Kidney (tissue), 22 donors: ENCODE measurements at regions of chr14 and their contacts with region 1.

Region 1: DNA sequence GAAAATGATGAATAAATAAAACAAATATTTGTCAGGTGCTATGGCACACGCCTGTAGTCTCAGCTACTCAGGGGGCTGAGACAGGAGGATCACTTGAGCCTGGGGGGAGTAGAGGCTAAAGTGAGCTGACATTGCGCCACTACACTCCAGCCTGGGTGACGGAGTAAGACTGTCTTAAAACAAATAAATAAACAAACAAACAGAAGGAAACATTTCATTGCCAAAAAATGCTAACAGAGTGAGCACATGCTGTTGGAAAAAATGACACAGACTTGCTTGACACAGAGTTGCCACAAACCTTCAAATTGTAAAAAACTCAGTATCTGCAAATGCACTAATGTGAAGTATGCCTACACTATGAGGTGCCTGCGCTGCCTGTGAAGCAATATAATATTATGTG is 50.8 kb upstream of the AP4S1 start:
- DNase-seq: no peak
- H3K4me3 ChIP-seq: no peak overlapping the region
- H3K27ac ChIP-seq: no peak overlapping the region
- H3K4me1 ChIP-seq: peaks cover 0 to 7% (median 0%) of the 10 kb centered on the region in 3 donors
- H3K27me3 ChIP-seq: no peaks in the 10 kb centered on the region
- CTCF ChIP-seq: no peak

Region 2: DNA sequence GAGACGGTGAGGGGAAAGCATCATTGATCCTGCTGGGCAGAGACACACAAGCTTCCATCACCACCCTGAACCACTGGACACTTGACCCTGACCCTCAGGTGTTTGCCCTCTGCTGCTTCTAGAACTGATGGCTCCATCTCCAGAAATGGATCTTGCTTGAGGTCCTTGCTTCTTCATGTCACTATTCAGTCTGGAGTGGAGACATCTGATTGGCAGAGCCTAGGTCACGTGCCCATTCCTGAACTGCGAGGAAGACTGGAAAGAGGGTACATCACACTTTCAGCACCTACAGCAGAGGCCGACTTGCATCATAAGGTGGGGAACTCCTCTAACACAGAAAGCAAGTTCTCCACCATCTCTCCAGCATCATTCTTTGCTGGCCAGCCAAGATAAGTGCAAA is 207.0 kb before region 1 on chr14:
- intact Hi-C with region 1: no loop called
- DNase-seq: no peak
- H3K4me3 ChIP-seq: no peak overlapping the region
- H3K27ac ChIP-seq: no peak overlapping the region
- H3K4me1 ChIP-seq: no peaks in the 10 kb centered on the region
- H3K27me3 ChIP-seq: no peaks in the 10 kb centered on the region
- CTCF ChIP-seq: no peak

Region 3: DNA sequence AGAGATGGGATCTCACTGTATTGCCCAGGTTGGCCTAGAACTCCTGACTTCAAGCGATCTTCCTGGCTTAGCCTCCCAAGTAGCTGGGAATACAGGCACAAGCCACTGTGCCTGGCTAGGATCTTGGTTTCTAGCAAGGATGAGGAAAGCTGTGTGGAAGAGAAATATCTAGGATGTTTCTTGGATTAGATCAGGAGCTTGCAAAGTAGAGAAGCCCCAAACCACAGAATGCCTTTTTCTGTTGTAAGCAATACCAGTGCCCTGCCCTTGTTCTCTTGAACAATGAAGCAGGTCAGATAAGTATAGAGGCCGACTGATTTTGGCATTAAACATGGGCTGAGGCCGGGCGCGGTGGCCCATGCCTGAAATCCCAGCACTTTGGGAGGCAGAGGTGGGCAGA is 95.8 kb after region 1 on chr14:
- intact Hi-C with region 1: no loop called
- DNase-seq: no peak
- H3K4me3 ChIP-seq: no peak overlapping the region
- H3K27ac ChIP-seq: no peak overlapping the region
- H3K4me1 ChIP-seq: no peaks in the 10 kb centered on the region
- H3K27me3 ChIP-seq: no peaks in the 10 kb centered on the region
- CTCF ChIP-seq: no peak

Region 4: GRCh38 chr14:31084385-31084784 is 109.8 kb after region 1 on chr14:
- intact Hi-C with region 1: loop called (anchors 5 kb)
- DNase-seq: peak in 1 of 5 donors; percentile 5
- H3K4me3 ChIP-seq: no peak overlapping the region
- H3K27ac ChIP-seq: no peak overlapping the region
- H3K4me1 ChIP-seq: no peaks in the 10 kb centered on the region
- H3K27me3 ChIP-seq: no peaks in the 10 kb centered on the region
- CTCF ChIP-seq: no peak